HEK293T (cell line): ENCODE measurements at regions of chr22 and their contacts with region 1.

Region 1: GRCh38 chr22:40512426-40513136 is 123.9 kb downstream of the MRTFA start:
- DNase-seq: no peak

Region 2: DNA sequence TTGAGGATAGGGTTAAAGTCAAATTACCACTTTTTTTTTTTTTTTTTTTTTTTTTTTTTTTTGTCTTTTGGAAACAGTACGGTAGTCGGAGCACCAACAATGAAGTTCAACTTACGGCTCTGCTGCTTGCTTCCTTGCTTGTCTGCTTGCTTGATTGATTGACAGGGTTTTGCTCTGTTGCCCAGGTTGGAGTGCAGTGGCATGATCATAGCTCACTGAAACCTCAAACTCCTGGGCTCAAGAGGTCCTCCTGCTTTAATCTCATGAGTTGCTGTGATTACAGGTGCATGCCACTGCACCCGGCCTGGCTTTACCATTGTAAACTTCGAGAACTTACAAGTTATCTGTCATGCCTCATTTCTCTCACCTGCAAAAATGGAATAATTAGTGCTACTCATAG is 136.4 kb before region 1 on chr22:
- CTCF ChIA-PET with region 1: no interaction called
- POLR2A ChIA-PET with region 1: no interaction called
- DNase-seq: no peak

Region 3: DNA sequence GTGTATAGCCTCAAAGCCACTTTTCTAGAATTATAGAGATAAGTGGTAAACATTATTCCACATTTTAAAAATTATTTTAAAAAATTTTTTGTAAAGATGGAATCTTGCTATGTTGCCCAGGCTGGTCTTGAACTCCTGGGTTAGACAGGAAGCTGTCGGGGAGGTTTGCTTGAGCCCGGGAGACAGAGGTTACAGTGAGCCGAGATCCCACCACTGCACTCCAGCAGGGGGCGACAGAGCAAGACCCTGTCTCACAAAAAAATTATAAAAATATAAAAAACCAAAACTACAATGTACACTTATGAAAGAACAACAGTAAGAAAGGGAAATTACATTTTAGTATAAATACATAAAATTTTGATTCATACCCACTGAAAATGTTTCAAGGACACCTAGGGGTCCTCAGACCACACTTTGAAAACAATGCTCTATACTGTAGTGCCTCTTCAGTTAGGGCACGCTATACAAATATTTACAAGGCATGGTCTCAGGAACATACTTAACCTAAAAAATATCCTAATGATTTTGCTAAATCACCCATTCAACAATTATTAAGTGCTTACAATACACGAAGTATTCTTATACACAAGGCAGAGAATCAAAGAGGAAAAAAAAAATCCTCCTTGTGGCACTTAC is 12.8 kb after region 1 on chr22:
- CTCF ChIA-PET with region 1: interaction called, 15 read pairs
- POLR2A ChIA-PET with region 1: interaction called, 5 read pairs
- DNase-seq: no peak